Vagina (tissue), 2 donors: ENCODE measurements at regions of chr7 and their contacts with region 1.

Region 1: DNA sequence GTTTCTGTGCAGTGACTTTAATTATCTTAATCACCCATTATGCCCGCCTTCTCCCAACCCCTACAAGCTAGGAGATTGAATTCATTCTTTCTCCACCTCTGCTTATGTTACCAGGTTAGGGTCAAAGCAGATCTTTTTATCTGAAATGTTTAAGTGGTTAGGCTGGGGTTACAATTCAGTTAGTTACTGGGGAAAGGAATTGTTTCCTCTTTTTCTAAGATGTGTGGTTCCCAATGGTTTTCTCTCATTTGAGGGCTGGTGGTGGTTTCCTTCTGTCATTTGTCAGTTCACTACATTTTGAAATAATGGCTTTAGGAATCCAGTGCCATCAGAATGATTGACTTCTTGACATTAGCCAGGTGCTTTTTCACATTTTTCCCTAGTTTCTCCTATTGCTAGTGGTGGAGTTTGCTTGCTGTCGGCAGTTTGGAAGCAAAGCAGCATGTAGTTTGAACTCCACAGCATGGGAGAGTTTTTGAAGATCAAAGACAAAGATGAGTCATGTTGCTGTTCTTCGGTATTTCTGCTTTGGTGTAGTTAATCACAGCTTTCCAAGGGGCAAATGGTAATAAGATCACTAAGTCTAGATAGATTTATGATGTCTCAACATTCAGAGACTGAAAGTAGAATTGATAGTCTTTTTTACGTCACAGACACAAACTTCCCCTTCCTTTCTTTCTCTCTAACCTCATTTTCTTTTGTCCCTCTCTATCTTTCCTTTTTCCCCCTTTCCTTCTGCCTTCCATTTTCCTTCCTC is 168.2 kb downstream of the SND1 start:
- DNase-seq: no peak
- H3K4me3 ChIP-seq: no peak overlapping the region
- H3K27ac ChIP-seq: no peak overlapping the region
- H3K4me1 ChIP-seq: peaks cover 16% of the 10 kb centered on the region
- H3K27me3 ChIP-seq: no peaks in the 10 kb centered on the region
- CTCF ChIP-seq: no peak
- POLR2A ChIP-seq: no peak

Region 2: GRCh38 chr7:129122751-129123509 is 1302.8 kb after region 1 on chr7:
- intact Hi-C with region 1: loop called (anchors 10 kb)
- DNase-seq: no peak
- H3K4me3 ChIP-seq: no peak overlapping the region
- H3K27ac ChIP-seq: no peak overlapping the region
- H3K4me1 ChIP-seq: no peaks in the 10 kb centered on the region
- H3K27me3 ChIP-seq: no peaks in the 10 kb centered on the region
- CTCF ChIP-seq: no peak
- POLR2A ChIP-seq: no peak